ENCODE measurements at regions of chr12 and their contacts with region 1.

Region 1: DNA sequence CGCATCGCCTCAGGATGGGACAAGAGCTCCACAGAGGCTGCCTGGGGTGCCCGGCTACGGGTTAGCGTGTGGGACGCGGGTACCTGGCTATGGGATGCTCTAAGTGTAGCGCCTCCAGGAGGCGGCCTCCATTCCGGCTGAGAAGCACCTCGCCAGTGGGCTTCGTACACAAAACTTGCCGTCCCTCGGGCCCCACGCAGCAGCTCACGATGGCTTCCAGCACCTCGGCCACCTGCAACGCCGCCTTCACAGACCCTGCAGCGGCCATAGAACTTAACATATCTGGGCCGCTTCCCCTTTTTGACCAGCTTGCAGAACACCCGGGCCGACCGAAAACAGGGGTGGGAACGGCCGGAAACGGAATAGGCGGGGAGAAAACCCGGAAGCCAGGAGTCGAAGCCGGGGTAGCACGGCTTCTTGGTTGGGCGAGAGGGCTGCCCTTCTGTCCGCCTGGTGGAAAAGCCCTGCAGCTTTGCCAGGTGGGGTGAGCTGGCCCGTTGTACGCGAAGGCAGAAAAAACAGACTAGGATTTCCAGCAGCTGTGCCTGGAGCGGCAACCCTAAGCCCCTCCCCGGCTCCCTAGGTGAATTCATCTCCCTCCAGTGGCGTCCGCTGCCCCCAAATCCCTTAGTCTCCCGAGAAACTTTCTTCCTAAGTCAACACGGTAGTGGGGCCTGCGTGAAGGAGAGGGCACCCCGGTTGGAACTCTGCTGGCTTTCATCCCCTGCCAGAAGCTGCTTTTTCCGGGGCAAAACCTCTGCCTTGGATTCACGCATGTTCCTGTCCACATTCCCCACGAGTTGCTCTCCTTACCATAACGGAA is at the start of gene BBS10:
- DNase-seq: peak; percentile 81
- H3K4me3 Mint-ChIP-seq: peak within 1 kb of the TSS; percentile 95
- H3K27ac Mint-ChIP-seq: peak within 1 kb of the TSS; percentile 88
- H3K4me1 Mint-ChIP-seq: peaks cover 29% of the 10 kb centered on the region
- H3K27me3 Mint-ChIP-seq: peaks cover 1% of the 10 kb centered on the region
- total RNA-seq, gene BBS10: 3.7 and 4.1 TPM in 2 replicates

Region 2: DNA sequence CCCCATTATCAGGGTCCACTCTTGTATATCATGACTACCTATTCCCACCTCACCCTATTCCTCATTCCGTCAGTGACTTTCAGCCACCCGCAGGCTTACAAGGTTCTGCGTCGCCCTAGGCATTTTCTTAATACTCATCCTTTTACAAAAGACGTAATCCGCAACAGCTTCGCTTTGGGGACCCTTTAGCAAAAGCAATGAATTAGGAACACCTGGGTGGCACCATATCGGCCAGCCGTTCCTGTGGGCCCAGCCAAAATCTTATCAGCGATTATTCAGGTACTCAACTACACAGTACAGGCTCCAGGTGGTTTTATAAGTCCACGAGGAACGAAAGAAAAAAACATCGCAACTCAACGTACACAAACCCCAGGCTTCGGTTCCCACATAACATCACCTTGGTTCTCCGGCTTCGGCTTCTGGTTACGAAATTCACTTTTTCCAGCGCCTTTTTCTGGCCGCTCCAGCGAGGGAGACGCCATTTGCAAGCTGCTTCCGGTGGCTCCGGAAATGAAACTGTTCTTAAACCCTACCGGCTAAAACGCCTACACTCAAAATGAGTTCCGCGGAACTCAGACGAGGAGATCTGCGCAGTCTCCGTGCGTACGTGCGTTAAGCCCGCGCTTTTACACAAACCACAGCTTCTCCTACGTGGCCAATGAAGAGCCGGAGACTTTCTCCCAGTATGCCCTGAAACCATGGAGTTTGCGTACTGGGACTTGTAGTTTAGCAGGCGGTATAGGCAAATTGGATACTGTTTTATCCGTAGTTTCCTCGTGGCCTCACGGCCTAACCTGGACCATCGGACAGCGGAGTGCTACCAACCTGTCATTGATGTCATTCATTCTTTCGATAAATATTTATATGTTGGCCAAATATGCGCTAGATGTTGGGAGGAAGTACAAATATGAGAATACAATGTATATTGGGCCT is 836.9 kb before region 1 on chr12 and contains the start of gene KRR1:
- intact Hi-C with region 1: loop called (anchors 1 kb)
- DNase-seq: peak; percentile 89
- H3K4me3 Mint-ChIP-seq: peak within 1 kb of the TSS; percentile 97
- H3K27ac Mint-ChIP-seq: peak within 1 kb of the TSS; percentile 98
- H3K4me1 Mint-ChIP-seq: peaks cover 45% of the 10 kb centered on the region
- H3K27me3 Mint-ChIP-seq: peaks cover 3% of the 10 kb centered on the region
- total RNA-seq, gene KRR1: 130 and 137 TPM in 2 replicates

Region 3: GRCh38 chr12:75944097-75944904 is 404.0 kb before region 1 on chr12:
- intact Hi-C with region 1: loop called (anchors 5 kb)
- DNase-seq: peak; percentile 27
- H3K4me3 Mint-ChIP-seq: peak overlapping the region; percentile 65
- H3K27ac Mint-ChIP-seq: peak overlapping the region; percentile 98
- H3K4me1 Mint-ChIP-seq: peaks cover 30% of the 10 kb centered on the region
- H3K27me3 Mint-ChIP-seq: no peaks in the 10 kb centered on the region

Region 4: GRCh38 chr12:76083904-76084862 is 264.1 kb before region 1 on chr12 and contains the start of gene NAP1L1:
- intact Hi-C with region 1: loop called (anchors 1 kb)
- DNase-seq: peak; percentile 96
- H3K4me3 Mint-ChIP-seq: peak within 1 kb of the TSS; percentile 100
- H3K27ac Mint-ChIP-seq: peak within 1 kb of the TSS; percentile 100
- H3K4me1 Mint-ChIP-seq: peaks cover 62% of the 10 kb centered on the region
- H3K27me3 Mint-ChIP-seq: no peaks in the 10 kb centered on the region
- total RNA-seq, gene NAP1L1: 584 and 605 TPM in 2 replicates

Region 5: DNA sequence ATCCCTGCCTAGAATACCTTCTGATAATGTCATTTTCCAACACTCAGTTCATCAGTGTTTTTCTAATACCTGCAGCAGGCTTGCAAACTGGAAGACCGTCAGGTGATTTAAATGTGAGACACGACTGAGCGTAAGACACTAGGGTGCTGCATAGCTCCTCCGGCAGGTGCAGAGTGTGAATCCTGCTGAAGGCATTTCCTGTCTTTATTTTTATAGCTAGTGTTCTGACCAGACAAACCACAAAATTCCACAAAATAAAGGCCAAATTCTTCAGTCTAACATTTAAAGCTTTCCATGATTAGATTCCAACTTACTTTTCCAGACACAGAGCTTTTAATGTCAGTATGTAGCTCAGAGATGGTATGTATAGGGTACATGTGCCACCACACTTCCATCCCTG is 70.8 kb before region 1 on chr12:
- intact Hi-C with region 1: loop called (anchors 2 kb)
- DNase-seq: no peak
- H3K4me3 Mint-ChIP-seq: no peak overlapping the region
- H3K27ac Mint-ChIP-seq: no peak overlapping the region
- H3K4me1 Mint-ChIP-seq: peaks cover 15% of the 10 kb centered on the region
- H3K27me3 Mint-ChIP-seq: peaks cover 6% of the 10 kb centered on the region

Region 6: GRCh38 chr12:76559400-76560085 is 211.3 kb after region 1 on chr12 and contains the start of gene OSBPL8:
- intact Hi-C with region 1: loop called (anchors 1 kb)
- DNase-seq: peak; percentile 91
- H3K4me3 Mint-ChIP-seq: peak within 1 kb of the TSS; percentile 94
- H3K27ac Mint-ChIP-seq: peak within 1 kb of the TSS; percentile 98
- H3K4me1 Mint-ChIP-seq: peaks cover 49% of the 10 kb centered on the region
- H3K27me3 Mint-ChIP-seq: no peaks in the 10 kb centered on the region
- total RNA-seq, gene OSBPL8: 86.9 and 95.9 TPM in 2 replicates